GM13976 (cell line): ENCODE measurements at regions of chr3 and their contacts with region 1.

Region 1: DNA sequence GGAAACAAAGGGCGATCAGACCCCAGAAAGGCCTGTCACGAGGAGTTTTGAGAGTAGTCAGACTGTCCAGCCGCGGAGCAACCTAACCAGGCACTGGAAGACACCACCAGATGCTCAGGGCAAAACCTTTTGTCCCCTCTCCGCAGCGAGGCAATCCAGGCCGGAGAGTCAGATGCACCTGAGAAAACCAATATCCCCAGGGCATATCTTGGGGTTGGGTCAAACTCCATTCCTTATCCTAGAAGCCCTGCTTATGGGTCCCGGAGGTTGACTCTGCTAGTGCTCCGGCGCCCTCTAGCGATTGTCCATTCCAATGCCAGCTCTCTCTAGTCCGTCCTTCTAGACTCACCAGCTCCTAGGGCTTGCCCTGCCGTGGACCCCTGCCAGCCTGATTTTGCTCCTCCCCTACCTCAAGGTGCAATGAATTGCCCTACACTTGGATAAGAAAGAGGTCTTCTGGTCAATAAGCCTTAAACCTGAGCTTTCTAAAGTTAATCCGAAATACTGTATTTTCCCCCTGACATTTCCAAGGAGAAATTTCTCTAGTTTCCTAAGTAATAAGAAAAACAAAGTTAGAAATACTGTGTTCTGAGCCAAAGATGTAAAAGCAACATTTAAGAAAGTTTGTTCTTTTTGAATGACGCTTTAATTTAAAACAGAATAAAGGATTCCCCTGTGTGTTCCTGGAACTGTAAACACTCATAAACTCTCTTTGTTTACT is 5.5 kb downstream of the CPNE4 start:
- DNase-seq: peak; percentile 73
- CTCF ChIP-seq: peak; percentile 84

Region 2: DNA sequence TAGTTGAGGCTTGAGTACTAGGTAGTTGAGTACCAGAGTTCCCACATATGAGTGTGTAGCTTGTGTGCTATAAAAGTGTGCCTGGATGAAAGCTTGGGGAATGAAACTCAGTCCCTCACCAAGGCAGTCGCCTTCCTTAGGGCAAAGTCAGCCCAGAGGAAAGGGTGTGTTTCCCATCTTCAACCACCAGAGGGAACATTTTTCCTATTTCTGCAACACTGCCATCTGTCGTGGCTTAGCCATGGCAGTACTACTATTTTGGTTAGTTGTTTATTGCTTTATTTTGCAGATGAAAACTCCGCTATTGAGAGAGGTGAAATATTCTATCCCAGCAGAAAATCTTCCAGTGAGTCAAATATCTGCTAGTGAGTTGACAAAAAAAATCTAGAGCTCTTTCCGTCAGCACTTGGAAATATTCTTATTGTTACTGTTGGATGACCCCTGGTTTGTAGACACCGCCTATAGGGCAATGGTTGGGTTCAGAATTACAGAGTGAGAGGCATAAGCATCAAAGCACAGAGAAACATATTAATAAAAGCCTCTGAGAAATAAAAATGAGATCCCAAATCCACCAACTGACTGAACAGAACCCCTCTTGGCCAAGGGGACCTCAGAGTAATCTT is 234.5 kb before region 1 on chr3:
- in situ Hi-C with region 1: loop called (anchors 10 kb)
- DNase-seq: peak; percentile 34
- CTCF ChIP-seq: peak; percentile 72